ENCODE measurements at regions of chr7 and their contacts with region 1.

Region 1: DNA sequence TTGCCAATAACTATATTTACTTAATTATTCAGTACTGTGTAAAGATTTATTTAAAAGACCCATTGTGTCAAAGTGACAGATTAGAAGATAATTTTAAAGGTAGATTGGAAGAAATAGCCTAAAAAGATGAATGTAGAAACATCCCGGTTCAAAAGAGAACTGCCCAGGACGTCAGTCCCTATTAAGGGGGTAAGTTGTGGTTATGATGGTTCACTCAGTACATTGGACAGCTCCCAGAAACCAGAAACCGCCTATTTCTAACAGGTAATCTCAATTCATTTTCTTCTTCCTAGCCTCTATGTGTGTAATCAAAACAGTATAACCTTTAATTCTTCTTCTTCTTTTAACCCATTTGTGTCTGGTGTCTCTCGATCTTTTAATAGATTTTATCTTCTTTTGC is 1.5 kb upstream of the FERD3L start:
- DNase-seq: peak; percentile 46
- ATAC-seq: peak; percentile 85
- H3K4me3 ChIP-seq: no peak overlapping the region
- H3K27ac ChIP-seq: no peak overlapping the region
- H3K4me1 ChIP-seq: 0 out of 2 replicates have a peak, but pooled peaks cover 1% of the 10 kb centered on the region
- H3K27me3 ChIP-seq: no peaks in the 10 kb centered on the region
- CTCF ChIP-seq: no peak

Region 2: GRCh38 chr7:19069842-19070241 is 76.9 kb before region 1 on chr7:
- CTCF ChIA-PET with region 1: no interaction called
- POLR2A ChIA-PET with region 1: no interaction called
- intact Hi-C with region 1: no loop called
- DNase-seq: peak; percentile 42
- ATAC-seq: peak; percentile 48; the same call in 1 of the 2 replicates
- H3K4me3 ChIP-seq: no peak overlapping the region
- H3K27ac ChIP-seq: no peak overlapping the region
- H3K4me1 ChIP-seq: no peaks in the 10 kb centered on the region
- H3K27me3 ChIP-seq: no peaks in the 10 kb centered on the region
- CTCF ChIP-seq: peak; percentile 47

Region 3: GRCh38 chr7:19215412-19215811 is 68.7 kb after region 1 on chr7:
- CTCF ChIA-PET with region 1: no interaction called
- POLR2A ChIA-PET with region 1: no interaction called
- intact Hi-C with region 1: loop called (anchors 1 kb)
- DNase-seq: peak; percentile 49
- ATAC-seq: peak; percentile 92
- H3K4me3 ChIP-seq: no peak overlapping the region
- H3K27ac ChIP-seq: no peak overlapping the region
- H3K4me1 ChIP-seq: no peaks in the 10 kb centered on the region; the same call in 1 of the 2 replicates
- H3K27me3 ChIP-seq: no peaks in the 10 kb centered on the region
- CTCF ChIP-seq: no peak